H1 (cell line): ENCODE measurements at regions of chr9 and their contacts with region 1.

Region 1: GRCh38 chr9:14428781-14429230 is 114.9 kb upstream of the NFIB start:
- DNase-seq: peak; percentile 41 to 92
- H3K4me3 ChIP-seq: no peak overlapping the region
- H3K27ac ChIP-seq: no peak overlapping the region
- H3K4me1 ChIP-seq: peaks cover 2 to 14% (median 8%) of the 10 kb centered on the region in 4 experiments; a peak in 5 of 7 replicates
- H3K27me3 ChIP-seq: no peaks in the 10 kb centered on the region
- CTCF ChIP-seq: peak; percentile 67 to 82 (median 77)
- EP300 ChIP-seq: peak in 1 of 2 experiments; percentile 27; a peak in 1 of 3 replicates
- POLR2A ChIP-seq: no peak
- RAD21 ChIP-seq: peak; percentile 77 to 83

Region 2: GRCh38 chr9:13427587-13427986 is 1001.2 kb before region 1 on chr9:
- CTCF ChIA-PET with region 1: interaction called, 10 read pairs
- POLR2A ChIA-PET with region 1: no interaction called
- DNase-seq: no peak
- H3K4me3 ChIP-seq: no peak overlapping the region; a peak in 1 of 8 replicates
- H3K27ac ChIP-seq: no peak overlapping the region
- H3K4me1 ChIP-seq: peaks cover 3 to 23% (median 12%) of the 10 kb centered on the region in 4 experiments
- H3K27me3 ChIP-seq: no peaks in the 10 kb centered on the region
- CTCF ChIP-seq: peak in 2 of 3 experiments; percentile 24 to 46; a peak in 2 of 4 replicates
- EP300 ChIP-seq: no peak
- POLR2A ChIP-seq: no peak
- RAD21 ChIP-seq: peak; percentile 79 to 86

Region 3: GRCh38 chr9:14412775-14413174 is 16.0 kb before region 1 on chr9:
- CTCF ChIA-PET with region 1: interaction called, 21 read pairs
- POLR2A ChIA-PET with region 1: no interaction called
- DNase-seq: no peak
- H3K4me3 ChIP-seq: no peak overlapping the region
- H3K27ac ChIP-seq: no peak overlapping the region
- H3K4me1 ChIP-seq: no peaks in the 10 kb centered on the region
- H3K27me3 ChIP-seq: no peaks in the 10 kb centered on the region
- CTCF ChIP-seq: no peak
- EP300 ChIP-seq: no peak
- POLR2A ChIP-seq: no peak
- RAD21 ChIP-seq: no peak

Region 4: DNA sequence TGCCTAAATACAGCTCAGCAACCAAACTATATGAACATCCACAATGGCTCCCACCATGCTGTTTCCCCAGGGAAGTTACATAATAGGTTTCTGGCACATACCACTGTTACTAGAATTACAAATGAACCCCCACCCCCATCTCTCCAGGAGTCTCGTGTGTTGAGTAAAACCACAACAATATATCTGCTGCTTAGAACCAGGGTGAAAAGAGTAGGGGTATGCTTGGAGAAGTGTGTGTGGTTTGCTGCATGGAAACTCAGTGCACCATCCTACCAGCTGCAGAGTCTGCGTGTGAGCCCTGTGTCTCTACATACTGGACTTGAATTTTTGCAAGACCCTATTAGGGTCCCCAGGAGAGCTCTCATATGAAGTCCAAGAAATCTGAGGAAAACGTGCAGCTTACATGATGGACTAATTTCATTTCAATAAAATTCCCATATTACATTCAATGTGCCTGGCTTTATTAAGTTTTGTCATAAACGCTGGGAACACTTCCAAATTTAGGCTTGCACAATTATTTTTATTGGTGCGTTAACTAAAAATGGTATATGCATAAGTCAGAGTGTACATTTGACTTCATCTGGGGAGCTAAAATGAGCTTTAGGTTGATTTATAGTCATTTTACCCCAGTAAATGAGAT is 10.4 kb before region 1 on chr9:
- CTCF ChIA-PET with region 1: interaction called, 21 read pairs
- POLR2A ChIA-PET with region 1: no interaction called
- DNase-seq: no peak
- H3K4me3 ChIP-seq: no peak overlapping the region
- H3K27ac ChIP-seq: no peak overlapping the region
- H3K4me1 ChIP-seq: peaks cover 5 to 15% (median 9%) of the 10 kb centered on the region in 4 experiments
- H3K27me3 ChIP-seq: no peaks in the 10 kb centered on the region
- CTCF ChIP-seq: no peak
- EP300 ChIP-seq: no peak
- POLR2A ChIP-seq: no peak
- RAD21 ChIP-seq: no peak

Region 5: GRCh38 chr9:14441976-14442651 is 13.3 kb after region 1 on chr9:
- CTCF ChIA-PET with region 1: interaction called, 85 read pairs
- POLR2A ChIA-PET with region 1: no interaction called
- DNase-seq: no peak
- H3K4me3 ChIP-seq: no peak overlapping the region
- H3K27ac ChIP-seq: no peak overlapping the region
- H3K4me1 ChIP-seq: peaks cover 0 to 3% (median 1%) of the 10 kb centered on the region in 4 experiments; a peak in 2 of 7 replicates
- H3K27me3 ChIP-seq: no peaks in the 10 kb centered on the region
- CTCF ChIP-seq: peak; percentile 60 to 77 (median 73)
- EP300 ChIP-seq: no peak
- POLR2A ChIP-seq: no peak
- RAD21 ChIP-seq: peak; percentile 71 to 79